CD8-positive, alpha-beta memory T cell (primary cell): ENCODE measurements at regions of chr11 and their contacts with region 1.

Region 1: GRCh38 chr11:66545701-66546367 is at the start of gene ZDHHC24:
- DNase-seq: peak; percentile 77 to 87 (median 82)
- H3K4me3 ChIP-seq: peak within 1 kb of the TSS; percentile 92
- H3K4me3 Mint-ChIP-seq: peak within 1 kb of the TSS; percentile 86 to 95 (median 92)
- H3K27ac ChIP-seq: peak within 1 kb of the TSS; percentile 75
- H3K27ac Mint-ChIP-seq: peak within 1 kb of the TSS; percentile 82 to 96 (median 94)
- H3K4me1 ChIP-seq: peaks cover 32% of the 10 kb centered on the region
- H3K4me1 Mint-ChIP-seq: peaks cover 34 to 50% (median 48%) of the 10 kb centered on the region in 3 donors
- H3K27me3 ChIP-seq: no peaks in the 10 kb centered on the region
- H3K27me3 Mint-ChIP-seq: peaks cover 0 to 6% of the 10 kb centered on the region in 2 donors
- total RNA-seq, gene ZDHHC24: 16.6 to 17.1 TPM

Region 2: GRCh38 chr11:66207876-66208275 is 338.0 kb before region 1 on chr11:
- CTCF ChIA-PET with region 1: no interaction called
- POLR2A ChIA-PET with region 1: no interaction called
- DNase-seq: no peak
- H3K4me3 ChIP-seq: no peak overlapping the region
- H3K4me3 Mint-ChIP-seq: no peak overlapping the region
- H3K27ac ChIP-seq: no peak overlapping the region
- H3K27ac Mint-ChIP-seq: peak overlapping the region in 2 of 8 donors; percentile 28 to 43
- H3K4me1 ChIP-seq: no peaks in the 10 kb centered on the region
- H3K4me1 Mint-ChIP-seq: peaks cover 0 to 3% (median 3%) of the 10 kb centered on the region in 3 donors
- H3K27me3 ChIP-seq: no peaks in the 10 kb centered on the region
- H3K27me3 Mint-ChIP-seq: peaks cover 0 to 2% of the 10 kb centered on the region in 2 donors

Region 3: GRCh38 chr11:66568124-66568916 is 22.5 kb after region 1 on chr11 and contains the start of gene CTSF:
- CTCF ChIA-PET with region 1: interaction called, 5 read pairs
- POLR2A ChIA-PET with region 1: interaction called, 12 read pairs
- DNase-seq: peak; percentile 46 to 81 (median 73)
- H3K4me3 ChIP-seq: peak within 1 kb of the TSS; percentile 41
- H3K4me3 Mint-ChIP-seq: peak within 1 kb of the TSS; percentile 45 to 83 (median 82)
- H3K27ac ChIP-seq: no peak within 1 kb of the TSS
- H3K27ac Mint-ChIP-seq: peak within 1 kb of the TSS in 4 of 8 donors; percentile 54 to 90 (median 88)
- H3K4me1 ChIP-seq: peaks cover 9% of the 10 kb centered on the region
- H3K4me1 Mint-ChIP-seq: peaks cover 4 to 15% (median 10%) of the 10 kb centered on the region in 3 donors
- H3K27me3 ChIP-seq: no peaks in the 10 kb centered on the region
- H3K27me3 Mint-ChIP-seq: peaks cover 5 to 11% of the 10 kb centered on the region in 2 donors
- total RNA-seq, gene CTSF: 5.6 to 6.0 TPM

Region 4: GRCh38 chr11:66616379-66617154 is 70.7 kb after region 1 on chr11 and contains the start of gene RBM14:
- CTCF ChIA-PET with region 1: no interaction called
- POLR2A ChIA-PET with region 1: interaction called, 17 read pairs
- DNase-seq: peak; percentile 97 to 99 (median 98)
- H3K4me3 ChIP-seq: peak within 1 kb of the TSS; percentile 99
- H3K4me3 Mint-ChIP-seq: peak within 1 kb of the TSS; percentile 97 to 99 (median 98)
- H3K27ac ChIP-seq: peak within 1 kb of the TSS; percentile 100
- H3K27ac Mint-ChIP-seq: peak within 1 kb of the TSS; percentile 97 to 100 (median 99)
- H3K4me1 ChIP-seq: peaks cover 41% of the 10 kb centered on the region
- H3K4me1 Mint-ChIP-seq: peaks cover 44 to 61% (median 47%) of the 10 kb centered on the region in 3 donors
- H3K27me3 ChIP-seq: no peaks in the 10 kb centered on the region
- H3K27me3 Mint-ChIP-seq: peaks cover 0 to 4% of the 10 kb centered on the region in 2 donors
- total RNA-seq, gene RBM14: 152 to 165 TPM